Naive thymus-derived CD4-positive, alpha-beta T cell (primary cell): ENCODE measurements at regions of chr5 and their contacts with region 1.

Region 1: DNA sequence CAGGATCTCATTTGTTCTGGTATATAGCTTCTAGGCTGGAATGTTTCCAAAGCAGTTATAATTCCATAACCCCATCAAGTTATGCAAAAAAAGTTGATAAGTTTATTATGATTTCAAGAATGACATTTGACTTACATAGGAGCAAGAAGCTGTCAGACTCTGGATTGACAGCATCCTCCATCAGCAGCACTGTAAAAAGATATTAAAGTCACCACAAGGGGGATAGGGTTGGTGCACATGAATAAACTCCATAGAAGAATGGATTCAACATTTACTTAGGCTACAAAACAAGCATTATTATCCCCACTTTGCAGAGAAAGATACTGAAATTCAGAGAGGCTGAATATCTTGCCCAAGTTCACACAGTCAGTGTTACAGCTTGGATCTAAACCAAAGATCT is 208.9 kb upstream of the SLC30A5 start:
- DNase-seq: peak in 5 of 9 donors; percentile 16 to 37 (median 27)
- ATAC-seq: peak; percentile 42
- H3K4me3 ChIP-seq: no peak overlapping the region
- H3K4me3 Mint-ChIP-seq: no peak overlapping the region
- H3K27ac ChIP-seq: no peak overlapping the region
- H3K27ac Mint-ChIP-seq: no peak overlapping the region
- H3K4me1 ChIP-seq: peaks cover 10 to 19% of the 10 kb centered on the region in 2 donors
- H3K4me1 Mint-ChIP-seq: peaks cover 13 to 54% (median 37%) of the 10 kb centered on the region in 7 donors
- H3K27me3 ChIP-seq: no peaks in the 10 kb centered on the region
- H3K27me3 Mint-ChIP-seq: peaks cover 0 to 3% (median 0%) of the 10 kb centered on the region in 5 donors

Region 2: DNA sequence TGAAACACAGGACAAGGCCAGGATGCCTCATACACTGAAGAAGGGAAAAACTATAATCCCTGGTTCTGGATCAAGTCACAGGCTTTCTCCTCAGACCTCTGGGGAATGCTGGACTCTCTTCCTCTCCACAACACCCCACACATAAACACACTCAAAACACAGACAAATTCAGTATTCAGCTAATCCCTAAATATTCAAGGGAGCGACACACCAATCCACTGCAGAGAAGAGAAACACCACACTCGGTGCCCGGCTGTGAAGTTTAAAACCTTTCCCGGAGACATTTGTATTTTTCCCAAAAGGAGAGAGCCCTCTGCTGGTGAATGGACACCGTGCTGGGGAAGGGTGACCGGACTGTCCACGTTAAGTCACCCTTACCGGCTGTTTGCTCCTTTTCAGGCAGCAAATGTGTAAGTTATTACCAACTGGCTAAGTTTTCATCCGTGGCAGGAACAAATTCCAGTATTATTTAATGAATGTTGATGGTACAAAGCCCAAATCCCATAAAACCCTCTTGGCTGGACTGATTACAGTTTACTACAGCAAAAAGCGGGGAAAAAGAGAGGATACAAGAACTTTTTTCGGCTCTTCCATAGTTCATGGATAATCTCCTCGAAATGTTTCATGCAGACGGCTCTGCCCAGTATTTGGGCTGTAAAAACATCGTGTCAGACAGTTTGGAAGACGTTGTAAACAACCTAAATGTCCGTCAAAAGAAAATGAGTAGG is 78.0 kb after region 1 on chr5:
- CTCF ChIA-PET with region 1: no interaction called
- POLR2A ChIA-PET with region 1: no interaction called
- intact Hi-C with region 1: loop called in 1 of 2 experiments (anchors 2 kb)
- DNase-seq: peak in 1 of 9 donors; percentile 23
- ATAC-seq: no peak
- H3K4me3 ChIP-seq: no peak overlapping the region
- H3K4me3 Mint-ChIP-seq: peak overlapping the region in 1 of 10 donors; percentile 20
- H3K27ac ChIP-seq: no peak overlapping the region
- H3K27ac Mint-ChIP-seq: peak overlapping the region in 1 of 9 donors; percentile 60
- H3K4me1 ChIP-seq: no peaks in the 10 kb centered on the region
- H3K4me1 Mint-ChIP-seq: peaks cover 0 to 6% (median 0%) of the 10 kb centered on the region in 7 donors
- H3K27me3 ChIP-seq: no peaks in the 10 kb centered on the region
- H3K27me3 Mint-ChIP-seq: no peaks in the 10 kb centered on the region